ENCODE measurements at regions of chr5 and their contacts with region 1.

Region 1: DNA sequence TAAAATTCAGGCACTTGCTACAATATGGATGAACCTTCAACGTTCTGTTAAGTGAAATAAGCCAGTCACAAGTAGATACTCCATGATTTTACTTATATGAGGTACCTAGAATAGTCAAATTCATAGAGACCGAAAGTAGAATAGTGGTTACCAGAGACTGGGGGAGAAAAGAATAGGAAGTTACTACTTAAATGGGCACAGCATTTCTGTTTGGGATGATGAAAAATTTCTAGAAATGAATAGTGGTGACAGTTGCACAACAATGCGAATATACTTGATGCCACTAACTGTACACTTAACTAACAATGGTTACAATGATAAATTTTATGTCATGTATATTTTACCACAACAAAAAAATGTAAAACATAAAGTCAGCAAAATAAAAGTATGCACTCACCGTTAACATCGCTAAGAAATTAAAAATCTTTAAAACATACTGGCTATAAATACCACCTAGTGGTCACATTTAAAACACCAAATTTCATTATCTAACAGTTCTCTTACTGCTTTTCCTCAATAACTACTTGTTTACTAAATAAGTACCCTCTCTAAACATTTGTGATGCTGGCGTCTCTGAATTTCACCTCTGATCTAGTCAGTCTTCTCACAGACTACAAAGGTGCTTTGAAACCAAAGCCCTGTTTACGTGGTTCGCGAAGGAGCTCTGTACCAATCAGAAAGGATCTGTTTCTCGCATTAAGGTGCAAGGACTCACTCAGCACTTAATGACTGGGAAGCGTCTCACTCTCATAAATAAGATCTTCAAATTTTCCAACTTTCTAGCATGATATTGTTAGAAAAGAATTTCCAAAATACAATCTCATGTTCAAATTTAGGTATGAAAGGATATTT is 22.7 kb downstream of the KIF3A start:
- DNase-seq: no peak
- ATAC-seq: no peak
- H3K4me3 ChIP-seq: no peak overlapping the region
- H3K27ac ChIP-seq: no peak overlapping the region
- H3K4me1 ChIP-seq: peaks cover 0 to 10% (median 0%) of the 10 kb centered on the region in 9 donors
- H3K27me3 ChIP-seq: no peaks in the 10 kb centered on the region
- CTCF ChIP-seq: peak; percentile 4 to 55 (median 42)

Region 2: DNA sequence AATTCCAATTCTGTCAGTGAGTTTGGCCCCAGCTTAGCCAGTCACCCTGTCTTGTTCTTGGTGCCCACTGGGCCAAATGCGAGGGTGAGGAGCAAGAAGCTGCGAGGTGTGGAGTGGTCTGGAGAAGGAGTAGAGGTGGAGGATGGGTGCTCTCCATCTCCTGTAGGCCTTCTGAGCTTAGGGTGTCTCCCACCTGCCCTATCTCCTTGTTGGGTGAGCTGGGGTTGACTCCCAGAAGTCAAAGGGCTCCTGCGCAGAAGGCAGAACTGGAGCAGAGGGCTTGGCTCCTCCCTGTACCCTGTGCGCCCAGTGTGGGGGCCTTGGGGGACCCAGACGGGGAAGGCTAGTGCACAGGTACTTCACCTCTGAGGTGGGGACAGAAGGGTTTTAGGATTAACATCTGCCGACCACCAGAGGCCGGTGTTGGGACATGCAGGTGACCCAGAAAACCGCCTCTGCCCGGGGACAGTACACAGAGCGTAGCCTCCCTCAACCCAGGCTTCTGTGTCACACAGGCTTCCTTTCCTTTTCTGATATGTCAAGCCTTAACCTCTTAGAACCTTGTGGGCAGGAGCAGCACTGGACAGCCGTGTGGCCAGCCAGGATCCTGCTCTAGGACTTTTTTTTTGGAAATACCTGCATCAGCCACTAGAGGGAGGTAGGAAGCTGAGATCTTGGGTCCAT is 188.2 kb before region 1 on chr5:
- intact Hi-C with region 1: loop called in 1 of 10 experiments (anchors 10 kb)
- DNase-seq: peak; percentile 9 to 31
- ATAC-seq: peak; percentile 38 to 88 (median 74)
- H3K4me3 ChIP-seq: no peak overlapping the region
- H3K27ac ChIP-seq: no peak overlapping the region
- H3K4me1 ChIP-seq: peaks cover 0 to 6% (median 3%) of the 10 kb centered on the region in 9 donors
- H3K27me3 ChIP-seq: no peaks in the 10 kb centered on the region
- CTCF ChIP-seq: peak; percentile 66 to 89 (median 80)